ENCODE measurements at regions of chr7 and their contacts with region 1.

Region 1: DNA sequence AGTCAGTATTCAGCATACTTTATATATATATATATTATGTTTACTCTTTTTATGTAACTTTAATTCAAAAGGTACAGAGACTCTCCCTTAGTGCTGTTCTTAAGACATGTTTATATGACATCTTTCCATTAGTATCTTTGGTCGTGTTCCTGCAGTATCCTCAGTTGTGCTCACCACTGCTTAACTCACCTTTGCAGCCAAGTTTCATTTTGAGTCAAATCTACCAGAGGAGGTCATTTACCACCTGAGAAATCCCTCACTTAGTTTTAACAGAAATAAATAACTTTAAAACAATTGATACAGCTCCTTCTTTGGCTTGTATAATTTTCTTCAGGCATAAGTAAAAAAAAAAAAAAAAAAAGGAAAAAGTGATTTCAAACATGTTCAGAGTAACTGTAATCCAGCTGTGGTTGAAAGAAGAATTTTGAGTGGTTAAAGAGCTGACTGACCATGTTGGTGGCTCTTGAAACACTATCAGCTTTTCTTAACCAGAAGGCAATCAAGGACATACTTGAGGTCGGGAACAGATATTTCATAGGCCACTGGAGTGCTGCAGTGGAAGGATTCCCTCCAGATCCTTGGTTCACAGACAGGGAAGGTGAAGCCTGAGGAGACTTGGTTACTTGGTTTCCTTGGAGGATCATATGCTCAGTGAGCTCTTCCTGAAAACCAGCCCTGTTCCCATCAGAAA is 116.8 kb downstream of the AUTS2 start:
- DNase-seq: no peak
- H3K4me3 ChIP-seq: no peak overlapping the region
- H3K27ac ChIP-seq: no peak overlapping the region
- H3K4me1 ChIP-seq: peaks cover 12% of the 10 kb centered on the region
- CTCF ChIP-seq: no peak

Region 2: GRCh38 chr7:69732222-69732621 is 17.2 kb after region 1 on chr7:
- CTCF ChIA-PET with region 1: no interaction called
- POLR2A ChIA-PET with region 1: interaction called, 13 read pairs
- intact Hi-C with region 1: no loop called
- DNase-seq: no peak
- H3K4me3 ChIP-seq: no peak overlapping the region
- H3K27ac ChIP-seq: no peak overlapping the region
- H3K4me1 ChIP-seq: peaks cover 60% of the 10 kb centered on the region
- CTCF ChIP-seq: no peak

Region 3: DNA sequence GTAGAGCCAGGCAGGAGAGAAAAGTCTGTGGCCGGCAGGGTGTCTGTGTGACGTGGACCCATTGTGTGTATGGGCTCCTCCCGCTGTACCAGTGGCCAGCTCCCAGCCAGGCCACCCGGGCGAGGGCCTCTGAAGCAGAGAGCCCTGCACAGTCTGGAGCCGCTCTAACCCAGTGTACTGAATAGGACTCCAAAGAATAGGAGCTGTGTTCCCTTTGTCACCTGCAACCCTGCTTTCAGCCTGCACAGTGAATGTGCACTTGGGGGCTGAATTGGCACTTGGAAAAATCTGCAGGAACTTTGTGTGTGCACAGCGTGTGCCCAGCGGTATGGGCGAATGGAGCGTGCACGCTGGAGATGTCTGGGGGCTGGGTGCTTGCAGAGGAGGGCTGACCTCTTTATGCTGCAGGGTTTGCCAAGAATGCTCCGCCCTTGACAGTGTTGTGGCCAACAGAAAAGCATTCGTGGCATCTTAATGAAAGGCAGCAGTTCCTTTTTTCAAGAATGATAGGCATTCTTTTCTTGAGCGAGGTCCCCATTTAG is 99.5 kb after region 1 on chr7:
- CTCF ChIA-PET with region 1: no interaction called
- POLR2A ChIA-PET with region 1: no interaction called
- intact Hi-C with region 1: no loop called
- DNase-seq: no peak
- H3K4me3 ChIP-seq: no peak overlapping the region
- H3K27ac ChIP-seq: no peak overlapping the region
- H3K4me1 ChIP-seq: peaks cover 53% of the 10 kb centered on the region
- CTCF ChIP-seq: no peak

Measured in OCI-LY7 (cell line).